Endothelial cell of umbilical vein (primary cell): ENCODE measurements at regions of chr3 and their contacts with region 1.

Region 1: DNA sequence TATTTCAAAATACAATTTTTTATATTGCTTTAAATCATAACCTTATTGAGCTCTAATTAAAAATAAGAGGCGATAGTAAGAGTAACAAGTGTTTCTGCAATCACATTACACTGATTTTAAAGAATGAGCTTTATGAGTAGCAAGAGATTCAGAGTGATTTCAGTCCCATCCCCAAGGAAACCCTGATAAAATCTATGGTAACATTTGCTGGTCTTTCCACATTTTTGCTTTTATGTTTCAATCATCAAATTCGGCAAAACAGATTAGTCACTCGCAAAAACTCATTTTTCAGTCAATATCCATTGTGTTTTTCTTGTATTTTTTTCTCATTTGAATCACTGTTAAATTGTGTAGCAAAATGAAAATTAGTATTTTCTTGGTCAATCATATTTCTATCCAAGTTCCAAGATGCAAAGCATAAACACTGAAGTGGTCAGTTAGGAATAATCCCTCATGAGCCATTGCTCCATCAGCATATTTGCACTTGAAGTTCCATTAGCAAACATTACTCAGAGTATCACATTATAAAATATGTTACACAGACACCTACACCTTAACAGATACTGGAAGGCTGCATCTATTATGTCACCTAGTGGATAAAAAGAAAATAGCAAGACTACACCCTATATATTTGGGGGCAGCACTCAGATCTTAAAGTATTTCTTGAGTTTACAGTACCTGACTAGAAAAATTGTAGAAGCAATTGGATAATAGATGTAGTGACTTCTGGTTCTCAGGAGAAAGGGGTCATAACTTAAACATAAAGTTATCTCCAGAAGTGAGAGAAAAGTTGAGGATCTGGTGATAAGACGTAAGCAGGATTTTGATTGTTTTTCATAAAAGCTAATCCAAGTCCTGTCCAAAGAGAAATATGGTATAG is 422.5 kb downstream of the GBE1 start:
- DNase-seq: peak; percentile 48
- H3K4me3 ChIP-seq: no peak overlapping the region
- H3K27ac ChIP-seq: no peak overlapping the region
- H3K4me1 ChIP-seq: no peaks in the 10 kb centered on the region
- H3K27me3 ChIP-seq: no peaks in the 10 kb centered on the region
- CTCF ChIP-seq: peak; percentile 28 to 38
- POLR2A ChIP-seq: no peak

Region 2: DNA sequence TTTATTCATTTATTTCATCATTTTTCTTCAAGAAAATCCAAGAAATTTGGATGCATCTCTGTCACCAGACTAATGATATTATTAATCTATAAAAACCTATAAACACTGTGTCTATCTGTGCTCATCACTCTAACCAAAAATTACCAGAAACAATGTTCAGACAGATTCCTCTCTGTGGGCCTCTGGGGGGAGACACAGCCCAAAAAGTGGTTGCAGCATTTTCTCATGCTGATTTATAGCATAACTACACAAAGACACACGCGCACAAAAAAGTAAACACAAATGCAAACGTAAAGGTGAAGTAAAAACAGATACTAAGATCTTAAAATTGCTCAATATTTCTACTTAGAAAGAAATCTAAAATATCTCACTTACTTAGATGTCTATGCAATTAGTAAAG is 553.4 kb before region 1 on chr3:
- CTCF ChIA-PET with region 1: interaction called, 6 read pairs
- POLR2A ChIA-PET with region 1: no interaction called
- dilution Hi-C with region 1: no loop called
- intact Hi-C with region 1: loop called (anchors 2 kb)
- DNase-seq: peak; percentile 57
- H3K4me3 ChIP-seq: no peak overlapping the region
- H3K27ac ChIP-seq: no peak overlapping the region
- H3K4me1 ChIP-seq: no peaks in the 10 kb centered on the region
- H3K27me3 ChIP-seq: no peaks in the 10 kb centered on the region
- CTCF ChIP-seq: peak; percentile 31 to 32
- POLR2A ChIP-seq: no peak

Region 3: DNA sequence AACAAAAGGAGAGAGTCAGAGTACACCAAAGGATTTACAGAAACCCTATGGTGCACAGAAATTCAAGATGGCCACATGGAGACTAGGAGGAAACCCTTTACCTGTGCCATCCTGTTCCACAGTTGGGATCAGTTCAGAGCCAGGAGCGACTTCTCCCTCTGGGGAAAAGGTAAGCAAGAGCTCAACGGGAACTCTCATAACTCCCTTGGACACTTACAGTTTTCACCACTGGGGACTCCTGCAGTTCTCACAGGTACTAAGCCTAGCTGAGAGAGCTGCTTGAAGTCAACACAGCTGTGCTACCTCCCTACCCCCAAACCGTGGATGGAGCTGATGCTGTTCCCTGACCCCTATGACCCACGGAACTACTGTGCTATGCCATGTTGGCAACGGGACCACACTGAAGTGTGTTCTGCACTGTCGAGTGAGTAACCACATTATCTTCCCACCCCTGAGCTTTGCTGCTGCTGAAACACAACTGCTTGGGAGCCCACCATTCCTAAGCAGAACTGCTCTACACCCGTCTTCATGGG is 184.2 kb before region 1 on chr3:
- CTCF ChIA-PET with region 1: no interaction called
- POLR2A ChIA-PET with region 1: no interaction called
- dilution Hi-C with region 1: no loop called
- intact Hi-C with region 1: no loop called
- DNase-seq: no peak
- H3K4me3 ChIP-seq: no peak overlapping the region
- H3K27ac ChIP-seq: no peak overlapping the region
- H3K4me1 ChIP-seq: peaks cover 6% of the 10 kb centered on the region
- H3K27me3 ChIP-seq: no peaks in the 10 kb centered on the region
- CTCF ChIP-seq: no peak
- POLR2A ChIP-seq: no peak